HepG2 (cell line): ENCODE measurements at regions of chr17 and their contacts with region 1.

Region 1: DNA sequence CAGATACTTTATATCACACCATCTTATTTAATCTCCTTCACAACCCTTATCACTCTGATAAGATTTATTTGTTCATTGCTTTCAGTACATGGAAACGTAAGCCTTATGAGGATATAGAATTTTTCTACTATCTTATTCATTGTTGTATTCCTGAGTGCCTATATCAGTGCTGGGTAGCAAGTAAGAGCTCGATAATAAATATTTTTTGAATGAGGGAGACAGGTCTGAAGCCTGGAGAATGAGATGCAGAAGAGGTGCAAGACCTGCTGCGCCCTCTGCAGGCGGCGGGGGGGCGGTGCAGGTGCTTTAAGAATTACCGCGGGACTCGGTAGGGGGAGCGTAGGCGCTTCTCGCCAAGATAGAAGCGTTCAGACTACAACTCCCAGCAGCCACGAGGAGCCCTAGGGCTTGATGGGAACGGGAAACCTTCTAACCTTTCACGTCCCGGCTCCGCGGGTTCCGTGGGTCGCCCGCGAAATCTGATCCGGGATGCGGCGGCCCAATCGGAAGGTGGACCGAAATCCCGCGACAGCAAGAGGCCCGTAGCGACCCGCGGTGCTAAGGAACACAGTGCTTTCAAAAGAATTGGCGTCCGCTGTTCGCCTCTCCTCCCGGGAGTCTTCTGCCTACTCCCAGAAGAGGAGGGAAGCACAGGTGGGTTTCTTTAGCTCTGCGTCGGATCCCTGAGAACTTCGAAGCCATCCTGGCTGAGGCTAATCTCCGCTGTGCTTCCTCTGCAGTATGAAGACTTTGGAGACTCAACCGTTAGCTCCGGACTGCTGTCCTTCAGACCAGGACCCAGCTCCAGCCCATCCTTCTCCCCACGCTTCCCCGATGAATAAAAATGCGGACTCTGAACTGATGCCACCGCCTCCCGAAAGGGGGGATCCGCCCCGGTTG is at the start of gene WRAP53:
- DNase-seq: peak; percentile 98
- ATAC-seq: peak; percentile 90
- H3K4me3 ChIP-seq: peak within 1 kb of the TSS; percentile 93 to 98 (median 95)
- H3K27ac ChIP-seq: peak within 1 kb of the TSS; percentile 95
- H3K4me1 ChIP-seq: peaks cover 33% of the 10 kb centered on the region
- H3K27me3 ChIP-seq: no peaks in the 10 kb centered on the region; a peak in 1 of 5 replicates
- CTCF ChIP-seq: peak; percentile 94
- EP300 ChIP-seq: no peak
- POLR2A ChIP-seq: peak; percentile 79 to 83
- RAD21 ChIP-seq: peak; percentile 76
- total RNA-seq, gene WRAP53: 18.1 and 19.5 TPM in 2 replicates

Region 2: DNA sequence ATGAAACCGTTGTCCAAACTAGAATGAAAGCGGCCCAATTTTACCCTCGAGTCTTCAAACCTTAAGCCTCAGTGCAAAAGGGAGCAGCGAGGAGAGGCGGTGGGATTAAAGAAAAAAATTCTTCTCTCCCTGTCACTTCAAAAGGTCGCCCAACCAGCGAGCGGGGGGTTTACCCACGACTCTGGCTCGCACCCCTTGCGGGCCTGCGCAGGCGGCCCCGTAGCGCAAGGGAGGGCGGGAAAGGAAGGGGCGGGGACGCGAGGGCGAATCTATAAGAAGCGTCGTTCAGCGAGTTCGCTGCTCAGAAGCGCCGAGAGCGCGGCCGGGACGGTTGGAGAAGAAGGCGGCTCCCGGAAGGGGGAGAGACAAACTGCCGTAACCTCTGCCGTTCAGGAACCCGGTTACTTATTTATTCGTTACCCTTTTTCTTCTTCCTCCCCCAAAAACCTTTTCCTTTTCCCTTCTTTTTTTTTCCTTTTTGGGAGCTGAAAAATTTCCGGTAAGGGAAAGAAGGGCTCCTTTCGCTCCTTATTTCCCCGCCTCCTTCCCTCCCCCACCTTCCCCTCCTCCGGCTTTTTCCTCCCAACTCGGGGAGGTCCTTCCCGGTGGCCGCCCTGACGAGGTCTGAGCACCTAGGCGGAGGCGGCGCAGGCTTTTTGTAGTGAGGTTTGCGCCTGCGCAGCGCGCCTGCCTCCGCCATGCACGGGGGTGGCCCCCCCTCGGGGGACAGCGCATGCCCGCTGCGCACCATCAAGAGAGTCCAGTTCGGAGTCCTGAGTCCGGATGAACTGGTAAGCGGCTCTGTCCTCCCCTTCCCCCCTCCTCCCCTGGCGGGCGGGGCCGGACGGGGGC is 203.9 kb before region 1 on chr17 and contains the start of gene POLR2A:
- CTCF ChIA-PET with region 1: no interaction called
- POLR2A ChIA-PET with region 1: interaction called, 12 read pairs
- in situ Hi-C with region 1: no loop called
- intact Hi-C with region 1: no loop called
- DNase-seq: peak; percentile 96
- ATAC-seq: peak; percentile 72
- H3K4me3 ChIP-seq: peak within 1 kb of the TSS; percentile 75 to 92 (median 90)
- H3K27ac ChIP-seq: peak within 1 kb of the TSS; percentile 100
- H3K4me1 ChIP-seq: peaks cover 65% of the 10 kb centered on the region
- H3K27me3 ChIP-seq: no peaks in the 10 kb centered on the region; a peak in 2 of 5 replicates
- CTCF ChIP-seq: no peak
- EP300 ChIP-seq: peak; percentile 44 to 51; a peak in 2 of 4 replicates
- POLR2A ChIP-seq: peak; percentile 100
- RAD21 ChIP-seq: peak; percentile 44; the same call in 1 of the 2 replicates
- total RNA-seq, gene POLR2A: 17.8 and 63.2 TPM in 2 replicates

Region 3: DNA sequence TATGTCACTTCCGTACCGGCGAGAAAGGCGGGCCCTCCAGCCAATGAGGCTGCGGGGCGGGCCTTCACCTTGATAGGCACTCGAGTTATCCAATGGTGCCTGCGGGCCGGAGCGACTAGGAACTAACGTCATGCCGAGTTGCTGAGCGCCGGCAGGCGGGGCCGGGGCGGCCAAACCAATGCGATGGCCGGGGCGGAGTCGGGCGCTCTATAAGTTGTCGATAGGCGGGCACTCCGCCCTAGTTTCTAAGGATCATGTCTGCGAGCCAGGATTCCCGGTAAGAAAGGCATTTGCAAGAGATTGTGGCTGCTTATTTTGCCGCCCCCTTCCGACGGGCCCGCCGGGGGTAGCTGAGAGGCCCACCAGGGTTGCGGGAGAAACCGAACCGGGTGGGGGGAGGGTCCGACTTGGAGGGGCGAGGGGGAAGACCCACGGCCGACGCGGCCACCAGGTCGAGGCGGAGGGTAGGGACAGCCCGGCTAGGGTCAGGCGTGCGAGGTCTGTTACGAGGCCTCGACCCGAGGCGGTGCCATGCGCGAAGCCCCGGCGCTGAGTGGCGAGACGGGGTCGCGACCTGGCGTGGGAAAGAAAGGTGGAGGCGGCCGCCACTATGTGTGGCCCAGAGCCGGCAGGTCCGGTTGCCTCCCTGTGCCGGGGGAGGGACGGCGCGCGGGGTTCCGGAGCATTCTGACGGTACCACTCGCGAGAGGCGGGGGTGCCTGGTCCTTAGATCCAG is 115.4 kb before region 1 on chr17:
- CTCF ChIA-PET with region 1: no interaction called
- POLR2A ChIA-PET with region 1: interaction called, 37 read pairs
- in situ Hi-C with region 1: no loop called
- intact Hi-C with region 1: loop called (anchors 5 kb)
- DNase-seq: peak; percentile 98
- ATAC-seq: no peak; the same call in 2 of the 3 replicates
- H3K4me3 ChIP-seq: peak overlapping the region; percentile 89 to 96 (median 94)
- H3K27ac ChIP-seq: peak overlapping the region; percentile 93
- H3K4me1 ChIP-seq: peaks cover 51% of the 10 kb centered on the region
- H3K27me3 ChIP-seq: no peaks in the 10 kb centered on the region; a peak in 1 of 5 replicates
- CTCF ChIP-seq: 0 out of 2 replicates have a peak, but pooled peaks have one; percentile 2
- EP300 ChIP-seq: no peak
- POLR2A ChIP-seq: peak; percentile 96 to 98
- RAD21 ChIP-seq: no peak; the same call in none of the 2 replicates

Region 4: GRCh38 chr17:7589204-7589868 is 98.8 kb before region 1 on chr17:
- CTCF ChIA-PET with region 1: interaction called, 3 read pairs
- POLR2A ChIA-PET with region 1: interaction called, 89 read pairs
- in situ Hi-C with region 1: loop called (anchors 5 kb)
- intact Hi-C with region 1: no loop called
- DNase-seq: no peak
- ATAC-seq: no peak
- H3K4me3 ChIP-seq: no peak overlapping the region
- H3K27ac ChIP-seq: no peak overlapping the region
- H3K4me1 ChIP-seq: peaks cover 13% of the 10 kb centered on the region
- H3K27me3 ChIP-seq: no peaks in the 10 kb centered on the region; a peak in 1 of 5 replicates
- CTCF ChIP-seq: no peak
- EP300 ChIP-seq: no peak
- POLR2A ChIP-seq: no peak
- RAD21 ChIP-seq: no peak

Region 5: GRCh38 chr17:7627250-7628121 is 60.7 kb before region 1 on chr17 and contains the start of gene SAT2:
- CTCF ChIA-PET with region 1: no interaction called
- POLR2A ChIA-PET with region 1: interaction called, 56 read pairs
- in situ Hi-C with region 1: loop called (anchors 5 kb)
- intact Hi-C with region 1: loop called (anchors 5 kb)
- DNase-seq: peak; percentile 95
- ATAC-seq: peak; percentile 85
- H3K4me3 ChIP-seq: peak within 1 kb of the TSS; percentile 82 to 92 (median 89)
- H3K27ac ChIP-seq: peak within 1 kb of the TSS; percentile 96
- H3K4me1 ChIP-seq: peaks cover 73% of the 10 kb centered on the region
- H3K27me3 ChIP-seq: no peaks in the 10 kb centered on the region; a peak in 1 of 5 replicates
- CTCF ChIP-seq: 0 out of 2 replicates have a peak, but pooled peaks have one; percentile 12
- EP300 ChIP-seq: peak; percentile 43 to 55; a peak in 3 of 4 replicates
- POLR2A ChIP-seq: peak; percentile 83 to 89
- RAD21 ChIP-seq: peak; percentile 21; the same call in 1 of the 2 replicates
- total RNA-seq, gene SAT2: 83.1 and 93.7 TPM in 2 replicates

Region 6: GRCh38 chr17:7650509-7651096 is 37.6 kb before region 1 on chr17 and contains the start of gene ATP1B2:
- CTCF ChIA-PET with region 1: no interaction called
- POLR2A ChIA-PET with region 1: interaction called, 20 read pairs
- in situ Hi-C with region 1: no loop called
- intact Hi-C with region 1: no loop called
- DNase-seq: peak; percentile 67
- ATAC-seq: peak; percentile 82
- H3K4me3 ChIP-seq: peak within 1 kb of the TSS; percentile 40 to 66 (median 43); a peak in 5 of 6 replicates
- H3K27ac ChIP-seq: no peak within 1 kb of the TSS
- H3K4me1 ChIP-seq: peaks cover 20% of the 10 kb centered on the region
- H3K27me3 ChIP-seq: peaks cover 6 to 55% of the 10 kb centered on the region in 2 experiments
- CTCF ChIP-seq: no peak
- EP300 ChIP-seq: no peak
- POLR2A ChIP-seq: no peak
- RAD21 ChIP-seq: no peak
- total RNA-seq, gene ATP1B2: not detected in 2 replicates

Region 7: GRCh38 chr17:7834962-7835813 is 147.0 kb after region 1 on chr17:
- CTCF ChIA-PET with region 1: no interaction called
- POLR2A ChIA-PET with region 1: interaction called, 31 read pairs
- in situ Hi-C with region 1: no loop called
- intact Hi-C with region 1: no loop called
- DNase-seq: peak; percentile 96
- ATAC-seq: peak; percentile 65
- H3K4me3 ChIP-seq: peak overlapping the region; percentile 84 to 93 (median 92)
- H3K27ac ChIP-seq: peak overlapping the region; percentile 92
- H3K4me1 ChIP-seq: peaks cover 58% of the 10 kb centered on the region
- H3K27me3 ChIP-seq: peaks cover 3 to 18% of the 10 kb centered on the region in 2 experiments; a peak in 4 of 5 replicates
- CTCF ChIP-seq: peak; percentile 92
- EP300 ChIP-seq: 0 out of 4 replicates have a peak, but pooled peaks have one; percentile 3 to 25
- POLR2A ChIP-seq: peak; percentile 46 to 57; a peak in 2 of 4 replicates
- RAD21 ChIP-seq: peak; percentile 74